Activated CD4-positive, alpha-beta T cell treated with anti-CD3 and anti-CD28 coated beads, Interleukin-2, amount 10 ng/mL, durations not matched to agents 24 days and 14 days (primary cell): ENCODE measurements at regions of chr12 and their contacts with region 1.

Region 1: GRCh38 chr12:71746983-71747611 is 7.6 kb upstream of the RAB21 start:
- DNase-seq: peak; percentile 84
- H3K4me3 Mint-ChIP-seq: no peak overlapping the region
- H3K27ac Mint-ChIP-seq: no peak overlapping the region
- H3K4me1 Mint-ChIP-seq: no peaks in the 10 kb centered on the region
- H3K27me3 Mint-ChIP-seq: peaks cover 36% of the 10 kb centered on the region

Region 2: DNA sequence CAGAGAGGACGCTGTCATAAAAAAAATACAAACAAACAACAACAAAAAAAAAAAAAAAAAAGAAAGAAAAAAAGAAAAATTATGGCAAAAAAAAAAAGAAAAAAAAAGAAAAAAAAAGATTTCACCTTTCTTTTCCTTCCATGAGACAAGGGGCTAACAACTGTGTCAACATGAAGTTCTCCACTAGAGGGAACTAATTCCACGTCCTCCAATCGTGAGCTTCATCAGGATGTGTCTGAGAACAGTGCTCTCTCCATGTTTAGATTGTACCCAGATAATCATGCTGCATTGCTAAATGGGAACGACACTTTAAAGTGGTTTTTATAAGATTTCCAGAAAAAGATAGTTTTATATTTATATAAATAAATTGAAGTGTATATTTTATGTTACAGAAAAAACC is 1013.7 kb before region 1 on chr12:
- intact Hi-C with region 1: loop called (anchors 2 kb)
- DNase-seq: peak; percentile 72
- H3K4me3 Mint-ChIP-seq: no peak overlapping the region
- H3K27ac Mint-ChIP-seq: no peak overlapping the region
- H3K4me1 Mint-ChIP-seq: no peaks in the 10 kb centered on the region
- H3K27me3 Mint-ChIP-seq: no peaks in the 10 kb centered on the region

Region 3: DNA sequence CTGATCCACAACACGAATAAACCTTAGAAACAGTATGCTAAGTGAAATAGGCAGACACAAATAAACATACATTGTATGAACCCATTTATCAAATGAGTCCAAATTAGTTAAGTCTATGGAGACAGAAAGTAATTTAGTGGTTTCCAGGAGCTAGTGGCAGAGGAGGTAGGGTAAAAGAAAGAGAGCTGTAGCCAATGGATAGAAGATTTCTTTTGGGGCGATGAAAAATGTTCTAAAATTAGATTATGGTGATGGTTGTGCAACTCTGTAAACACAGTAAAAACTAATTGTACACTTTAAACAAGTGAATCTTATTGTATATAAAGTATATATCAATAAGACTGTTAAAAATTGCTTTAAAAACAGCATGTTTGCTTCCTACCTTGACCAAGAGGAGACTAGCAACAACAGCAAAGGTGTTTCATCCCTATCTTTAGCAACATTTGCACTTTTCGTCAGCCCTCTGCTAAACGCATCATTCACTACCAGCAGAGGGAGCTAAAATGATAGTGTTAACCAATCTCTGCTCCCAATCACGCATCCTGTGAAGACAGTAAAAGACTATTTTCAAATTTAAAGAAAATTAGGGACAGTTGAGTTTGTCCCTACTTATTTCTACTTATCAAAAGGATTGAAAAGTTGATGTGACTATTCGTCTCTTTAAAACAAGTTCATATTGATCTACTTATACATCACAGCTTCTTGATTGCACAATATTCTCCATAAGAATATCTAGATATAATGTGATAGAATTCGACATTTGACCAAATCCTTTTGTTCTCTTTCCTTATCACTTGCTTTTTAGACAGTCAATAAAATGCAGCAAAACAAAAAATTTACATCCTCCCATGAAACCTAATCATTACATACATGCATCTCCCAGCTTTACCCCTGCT is 331.5 kb before region 1 on chr12:
- intact Hi-C with region 1: loop called (anchors 1 kb)
- DNase-seq: peak; percentile 80
- H3K4me3 Mint-ChIP-seq: no peak overlapping the region
- H3K27ac Mint-ChIP-seq: no peak overlapping the region
- H3K4me1 Mint-ChIP-seq: no peaks in the 10 kb centered on the region
- H3K27me3 Mint-ChIP-seq: peaks cover 8% of the 10 kb centered on the region

Region 4: GRCh38 chr12:71636704-71637115 is 110.4 kb before region 1 on chr12:
- intact Hi-C with region 1: loop called (anchors 2 kb)
- DNase-seq: peak; percentile 76
- H3K4me3 Mint-ChIP-seq: no peak overlapping the region
- H3K27ac Mint-ChIP-seq: peak overlapping the region; percentile 67
- H3K4me1 Mint-ChIP-seq: peaks cover 10% of the 10 kb centered on the region
- H3K27me3 Mint-ChIP-seq: no peaks in the 10 kb centered on the region